ENCODE measurements at regions of chr13 and their contacts with region 1.

Region 1: DNA sequence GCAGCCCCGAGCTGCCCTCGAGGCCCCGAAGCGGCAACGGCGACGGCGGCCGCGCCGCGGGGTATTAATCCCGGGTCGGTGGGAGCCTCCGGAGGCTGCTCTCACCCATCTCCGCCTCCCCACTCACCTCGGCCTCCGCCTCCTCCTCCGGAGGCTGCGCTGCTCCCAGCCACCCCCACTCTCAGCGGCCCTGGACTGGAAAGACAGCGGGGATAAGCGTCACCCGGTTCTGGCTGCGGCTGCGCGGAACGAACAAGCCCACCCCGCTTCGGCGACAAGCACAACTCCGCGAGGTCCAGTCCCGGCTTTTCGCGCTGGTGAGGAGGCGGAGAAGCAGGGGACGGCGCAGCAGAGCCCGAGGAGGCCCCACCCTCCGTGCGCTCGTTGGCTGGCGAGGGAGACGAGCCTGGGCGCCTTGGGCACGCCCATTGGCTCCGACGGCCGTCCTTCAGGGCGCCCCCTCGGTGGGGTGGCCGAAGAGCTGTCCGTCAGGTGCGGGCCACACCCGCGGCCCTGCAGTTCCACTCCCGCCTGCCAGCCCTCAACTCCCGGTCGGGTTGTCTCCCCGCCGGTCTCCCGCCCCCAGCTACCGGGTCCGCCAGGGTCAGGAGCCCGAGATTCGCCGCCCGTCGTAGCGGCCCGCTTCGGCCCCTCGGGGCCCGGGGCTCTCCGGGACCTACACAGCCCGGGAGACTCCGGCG is at the start of gene ZMYM5:
- DNase-seq: peak; percentile 96
- H3K4me3 Mint-ChIP-seq: peak within 1 kb of the TSS; percentile 86
- H3K27ac Mint-ChIP-seq: peak within 1 kb of the TSS; percentile 97
- H3K4me1 Mint-ChIP-seq: peaks cover 40% of the 10 kb centered on the region
- H3K27me3 Mint-ChIP-seq: no peaks in the 10 kb centered on the region
- total RNA-seq, gene ZMYM5: 17.1 to 17.3 TPM

Region 2: DNA sequence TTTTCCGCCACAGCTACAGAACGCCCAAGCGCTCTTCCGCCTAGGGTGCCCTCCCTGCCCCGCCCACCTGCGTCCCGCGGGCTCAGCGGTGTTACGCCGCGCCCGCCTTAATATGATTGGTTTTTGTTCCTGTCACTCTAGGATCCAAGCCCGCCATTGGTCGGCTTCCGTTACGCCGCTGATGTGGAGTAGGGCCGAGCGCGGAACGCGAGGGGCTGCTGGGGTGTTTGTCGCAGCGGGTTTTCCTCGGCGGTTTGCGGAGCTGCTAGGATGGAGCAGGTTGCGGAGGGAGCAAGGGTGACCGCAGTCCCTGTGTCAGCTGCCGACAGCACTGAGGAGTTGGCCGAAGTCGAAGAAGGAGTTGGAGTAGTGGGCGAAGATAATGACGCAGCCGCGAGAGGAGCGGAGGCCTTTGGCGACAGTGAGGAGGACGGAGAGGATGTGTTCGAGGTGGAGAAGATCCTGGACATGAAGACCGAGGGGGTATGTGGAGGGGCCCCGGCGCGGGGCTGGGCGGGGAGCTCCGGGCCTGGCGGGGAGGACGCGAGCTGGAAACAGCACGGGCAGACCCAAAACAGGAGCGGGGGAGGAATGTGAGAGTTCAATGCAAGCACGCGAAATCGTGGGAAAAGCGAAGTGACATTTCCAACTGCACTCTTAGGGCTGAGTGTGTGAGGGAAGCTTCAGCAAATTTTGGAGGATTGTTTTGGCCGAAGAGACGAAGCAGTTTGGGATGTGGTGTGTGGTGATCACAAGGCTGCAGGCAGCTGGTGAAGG is 229.8 kb before region 1 on chr13 and contains the start of gene MPHOSPH8:
- CTCF ChIA-PET with region 1: interaction called, 3 read pairs
- POLR2A ChIA-PET with region 1: interaction called, 24 read pairs
- DNase-seq: peak; percentile 95
- H3K4me3 Mint-ChIP-seq: peak within 1 kb of the TSS; percentile 100
- H3K27ac Mint-ChIP-seq: peak within 1 kb of the TSS; percentile 92
- H3K4me1 Mint-ChIP-seq: peaks cover 26% of the 10 kb centered on the region
- H3K27me3 Mint-ChIP-seq: no peaks in the 10 kb centered on the region
- total RNA-seq, gene MPHOSPH8: 44.4 to 47.2 TPM

Region 3: DNA sequence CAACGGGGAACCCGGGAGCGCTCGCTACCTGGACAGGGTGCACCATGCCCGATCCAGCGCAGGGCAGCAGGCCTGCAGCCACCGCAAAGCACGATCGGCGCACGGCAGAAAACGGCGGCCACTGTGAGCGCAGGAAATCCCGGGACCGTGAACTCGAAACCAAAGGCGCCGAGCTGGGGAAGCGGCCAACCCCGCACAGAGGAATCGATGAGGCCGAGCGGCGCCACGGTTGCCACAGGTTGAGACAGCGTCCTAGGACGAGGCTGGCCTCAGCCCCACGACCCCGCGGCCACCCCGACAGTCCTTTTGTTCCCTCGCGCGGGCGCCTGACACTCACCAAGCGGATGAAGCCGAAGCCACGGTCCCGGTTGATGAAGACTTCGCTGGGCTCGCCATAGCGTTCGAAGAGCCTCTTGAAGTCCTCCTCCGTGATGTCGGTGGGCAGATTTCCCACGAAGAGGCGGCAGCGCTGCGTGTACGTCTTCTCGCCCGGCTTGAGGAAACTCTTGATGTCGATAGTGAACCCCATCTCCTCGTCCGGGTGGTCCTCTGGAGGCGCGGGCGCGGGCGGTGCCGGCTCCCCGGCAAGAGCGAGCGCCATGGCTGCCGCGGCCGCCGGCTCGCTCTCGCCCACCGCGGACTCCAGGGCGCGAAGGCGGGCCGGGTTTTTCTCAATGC is 81.3 kb before region 1 on chr13:
- CTCF ChIA-PET with region 1: interaction called, 4 read pairs
- POLR2A ChIA-PET with region 1: interaction called, 109 read pairs
- DNase-seq: peak; percentile 65
- H3K4me3 Mint-ChIP-seq: peak overlapping the region; percentile 98
- H3K27ac Mint-ChIP-seq: peak overlapping the region; percentile 99
- H3K4me1 Mint-ChIP-seq: peaks cover 14% of the 10 kb centered on the region
- H3K27me3 Mint-ChIP-seq: no peaks in the 10 kb centered on the region

Region 4: DNA sequence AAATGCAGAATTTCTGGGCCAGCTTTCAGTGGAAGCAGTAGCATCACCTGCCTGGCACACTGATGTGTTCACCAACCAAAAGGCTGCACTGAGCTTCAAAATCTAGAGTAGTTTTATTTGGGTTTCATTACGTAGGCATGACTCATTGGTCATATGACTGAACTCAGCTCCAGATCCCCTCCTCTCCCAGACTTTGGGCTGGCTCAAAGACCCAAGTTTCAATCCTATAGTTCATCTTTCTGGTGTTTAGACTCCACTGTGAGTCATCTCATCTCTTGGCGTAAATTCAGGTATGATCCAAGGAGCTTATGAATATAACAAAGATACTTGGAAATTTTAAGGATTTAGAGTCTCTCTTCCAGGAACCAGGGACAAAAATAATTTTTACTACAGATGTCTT is 17.7 kb before region 1 on chr13:
- CTCF ChIA-PET with region 1: interaction called, 8 read pairs
- POLR2A ChIA-PET with region 1: interaction called, 12 read pairs
- DNase-seq: no peak
- H3K4me3 Mint-ChIP-seq: no peak overlapping the region
- H3K27ac Mint-ChIP-seq: no peak overlapping the region
- H3K4me1 Mint-ChIP-seq: peaks cover 9% of the 10 kb centered on the region
- H3K27me3 Mint-ChIP-seq: no peaks in the 10 kb centered on the region

Region 5: GRCh38 chr13:19959831-19960652 is 96.6 kb after region 1 on chr13:
- CTCF ChIA-PET with region 1: interaction called, 11 read pairs
- POLR2A ChIA-PET with region 1: interaction called, 48 read pairs
- DNase-seq: peak; percentile 89
- H3K4me3 Mint-ChIP-seq: peak overlapping the region; percentile 98
- H3K27ac Mint-ChIP-seq: peak overlapping the region; percentile 99
- H3K4me1 Mint-ChIP-seq: peaks cover 26% of the 10 kb centered on the region
- H3K27me3 Mint-ChIP-seq: peaks cover 10% of the 10 kb centered on the region

Region 6: GRCh38 chr13:19984430-19985218 is 121.2 kb after region 1 on chr13:
- CTCF ChIA-PET with region 1: no interaction called
- POLR2A ChIA-PET with region 1: interaction called, 10 read pairs
- DNase-seq: peak; percentile 18
- H3K4me3 Mint-ChIP-seq: no peak overlapping the region
- H3K27ac Mint-ChIP-seq: peak overlapping the region; percentile 66
- H3K4me1 Mint-ChIP-seq: peaks cover 35% of the 10 kb centered on the region
- H3K27me3 Mint-ChIP-seq: no peaks in the 10 kb centered on the region